GM10248 (cell line): ENCODE measurements at regions of chr4 and their contacts with region 1.

Region 1: GRCh38 chr4:128307123-128307571 is 19.5 kb upstream of the PGRMC2 start:
- DNase-seq: no peak
- CTCF ChIP-seq: no peak

Region 2: GRCh38 chr4:128060699-128061565 is 246.2 kb before region 1 on chr4 and contains the start of gene LARP1B:
- CTCF ChIA-PET with region 1: no interaction called
- POLR2A ChIA-PET with region 1: no interaction called
- DNase-seq: peak; percentile 98
- CTCF ChIP-seq: no peak

Region 3: DNA sequence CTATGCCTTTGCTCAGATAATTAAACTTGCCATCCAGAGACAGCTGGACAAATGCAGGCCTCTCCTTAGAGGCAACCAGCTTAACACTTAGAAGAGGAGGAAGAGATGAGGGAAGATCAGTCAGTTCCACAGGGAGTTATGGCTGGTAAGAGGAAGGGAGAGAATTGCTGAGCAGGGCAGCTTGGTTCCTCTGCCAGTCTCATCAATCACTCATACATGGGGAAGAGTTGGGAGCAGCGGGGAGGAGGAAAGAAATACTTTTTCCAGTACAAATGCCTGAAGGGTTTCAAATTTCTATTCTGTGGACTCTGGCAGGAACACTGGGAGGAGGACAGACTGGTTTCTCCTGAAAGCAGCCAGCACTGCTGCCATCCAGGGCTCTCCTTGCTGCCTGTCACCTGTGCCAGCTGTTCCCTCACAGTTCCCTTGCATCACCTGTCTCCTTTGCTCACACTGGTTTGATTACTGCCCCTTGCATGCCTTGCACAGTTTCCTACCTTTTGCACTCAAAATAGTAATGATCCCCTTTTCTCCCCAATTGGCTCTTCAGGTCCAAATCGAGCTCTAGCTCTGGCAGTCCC is 79.1 kb before region 1 on chr4:
- CTCF ChIA-PET with region 1: no interaction called
- POLR2A ChIA-PET with region 1: no interaction called
- DNase-seq: no peak
- CTCF ChIP-seq: no peak

Region 4: DNA sequence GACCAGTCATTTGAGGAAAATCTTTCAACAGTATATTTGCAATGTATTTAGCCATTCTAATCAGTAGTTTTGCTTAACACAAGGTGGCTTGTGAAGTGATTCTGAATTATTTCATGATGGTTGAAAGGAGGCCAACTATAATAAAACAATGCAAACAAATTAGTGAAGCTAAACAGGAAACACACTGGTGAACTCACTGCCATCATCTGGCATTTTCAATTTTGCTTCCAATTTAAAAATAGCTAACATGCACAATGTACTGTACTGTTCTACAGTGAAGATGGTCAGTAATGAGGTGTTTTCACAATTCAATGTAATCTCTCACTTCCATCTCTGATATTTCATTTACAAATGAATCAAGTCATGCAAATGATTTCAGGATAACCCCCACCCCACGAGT is 50.6 kb before region 1 on chr4:
- CTCF ChIA-PET with region 1: no interaction called
- POLR2A ChIA-PET with region 1: no interaction called
- DNase-seq: no peak
- CTCF ChIP-seq: no peak

Region 5: GRCh38 chr4:128295255-128295654 is 11.9 kb before region 1 on chr4:
- CTCF ChIA-PET with region 1: interaction called, 10 read pairs
- POLR2A ChIA-PET with region 1: no interaction called
- DNase-seq: no peak
- CTCF ChIP-seq: no peak

Region 6: GRCh38 chr4:128322995-128323394 is 15.8 kb after region 1 on chr4:
- CTCF ChIA-PET with region 1: interaction called, 10 read pairs
- POLR2A ChIA-PET with region 1: no interaction called
- DNase-seq: no peak
- CTCF ChIP-seq: no peak

Region 7: GRCh38 chr4:128379860-128380259 is 72.7 kb after region 1 on chr4:
- CTCF ChIA-PET with region 1: no interaction called
- POLR2A ChIA-PET with region 1: no interaction called
- DNase-seq: peak; percentile 41
- CTCF ChIP-seq: peak; percentile 47